Natural killer cell (primary cell): ENCODE measurements at regions of chr10 and their contacts with region 1.

Region 1: GRCh38 chr10:114526504-114527238 is 122.4 kb upstream of the AFAP1L2 start:
- DNase-seq: peak; percentile 80 to 97
- ATAC-seq: peak; percentile 90 to 95 (median 94)
- H3K4me3 ChIP-seq: peak overlapping the region; percentile 48
- H3K4me3 Mint-ChIP-seq: peak overlapping the region; percentile 97
- H3K27ac ChIP-seq: peak overlapping the region; percentile 88
- H3K27ac Mint-ChIP-seq: peak overlapping the region; percentile 96 to 99
- H3K4me1 ChIP-seq: peaks cover 44% of the 10 kb centered on the region
- H3K4me1 Mint-ChIP-seq: peaks cover 52 to 57% of the 10 kb centered on the region in 2 donors
- H3K27me3 ChIP-seq: no peaks in the 10 kb centered on the region
- H3K27me3 Mint-ChIP-seq: no peaks in the 10 kb centered on the region
- CTCF ChIP-seq: no peak

Region 2: GRCh38 chr10:114541081-114541796 is 14.6 kb after region 1 on chr10:
- intact Hi-C with region 1: loop called (anchors 1 kb)
- DNase-seq: peak; percentile 68 to 94
- ATAC-seq: peak; percentile 89 to 93 (median 89)
- H3K4me3 ChIP-seq: no peak overlapping the region
- H3K4me3 Mint-ChIP-seq: peak overlapping the region; percentile 76
- H3K27ac ChIP-seq: peak overlapping the region; percentile 96
- H3K27ac Mint-ChIP-seq: peak overlapping the region; percentile 88 to 91
- H3K4me1 ChIP-seq: peaks cover 78% of the 10 kb centered on the region
- H3K4me1 Mint-ChIP-seq: peaks cover 70 to 75% of the 10 kb centered on the region in 2 donors
- H3K27me3 ChIP-seq: no peaks in the 10 kb centered on the region
- H3K27me3 Mint-ChIP-seq: peaks cover 0 to 2% of the 10 kb centered on the region in 2 donors
- CTCF ChIP-seq: no peak